ENCODE measurements at regions of chr15 and their contacts with region 1.

Region 1: GRCh38 chr15:57375827-57376695 is at the start of gene CGNL1:
- DNase-seq: peak; percentile 9
- ATAC-seq: no peak
- H3K4me3 Mint-ChIP-seq: peak within 1 kb of the TSS; percentile 41
- H3K27ac Mint-ChIP-seq: no peak within 1 kb of the TSS
- H3K4me1 Mint-ChIP-seq: peaks cover 10% of the 10 kb centered on the region
- H3K27me3 Mint-ChIP-seq: peaks cover 44% of the 10 kb centered on the region
- total RNA-seq, gene CGNL1: not detected

Region 2: GRCh38 chr15:57205996-57206395 is 170.1 kb before region 1 on chr15:
- CTCF ChIA-PET with region 1: no interaction called
- POLR2A ChIA-PET with region 1: no interaction called
- intact Hi-C with region 1: no loop called
- DNase-seq: no peak
- ATAC-seq: no peak
- H3K4me3 Mint-ChIP-seq: no peak overlapping the region
- H3K27ac Mint-ChIP-seq: no peak overlapping the region
- H3K4me1 Mint-ChIP-seq: peaks cover 7% of the 10 kb centered on the region
- H3K27me3 Mint-ChIP-seq: no peaks in the 10 kb centered on the region

Region 3: DNA sequence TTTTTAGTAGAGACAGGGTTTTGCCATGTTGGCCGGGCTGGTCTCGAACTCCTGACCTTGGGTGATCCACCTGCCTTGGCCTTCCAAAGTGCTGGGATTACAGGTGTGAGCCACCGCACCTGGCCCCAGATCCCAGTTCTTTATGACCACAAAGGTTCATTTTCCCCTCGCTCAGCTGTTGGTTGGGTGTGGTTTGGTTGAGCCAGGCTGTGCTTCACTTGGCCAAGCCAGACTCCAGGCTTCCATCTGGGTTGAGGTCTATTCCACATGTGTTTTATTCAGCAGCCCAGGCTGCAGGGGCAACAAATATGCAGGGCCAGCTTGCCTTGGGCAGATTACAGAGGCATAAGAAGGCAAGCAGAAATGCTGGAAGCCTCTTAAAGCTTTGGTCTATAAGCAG is 13.9 kb after region 1 on chr15:
- CTCF ChIA-PET with region 1: interaction called, 3 read pairs
- POLR2A ChIA-PET with region 1: no interaction called
- intact Hi-C with region 1: loop called in 1 of 2 experiments (anchors 1 kb)
- DNase-seq: no peak
- ATAC-seq: no peak
- H3K4me3 Mint-ChIP-seq: no peak overlapping the region
- H3K27ac Mint-ChIP-seq: no peak overlapping the region
- H3K4me1 Mint-ChIP-seq: no peaks in the 10 kb centered on the region
- H3K27me3 Mint-ChIP-seq: peaks cover 6% of the 10 kb centered on the region

Region 4: DNA sequence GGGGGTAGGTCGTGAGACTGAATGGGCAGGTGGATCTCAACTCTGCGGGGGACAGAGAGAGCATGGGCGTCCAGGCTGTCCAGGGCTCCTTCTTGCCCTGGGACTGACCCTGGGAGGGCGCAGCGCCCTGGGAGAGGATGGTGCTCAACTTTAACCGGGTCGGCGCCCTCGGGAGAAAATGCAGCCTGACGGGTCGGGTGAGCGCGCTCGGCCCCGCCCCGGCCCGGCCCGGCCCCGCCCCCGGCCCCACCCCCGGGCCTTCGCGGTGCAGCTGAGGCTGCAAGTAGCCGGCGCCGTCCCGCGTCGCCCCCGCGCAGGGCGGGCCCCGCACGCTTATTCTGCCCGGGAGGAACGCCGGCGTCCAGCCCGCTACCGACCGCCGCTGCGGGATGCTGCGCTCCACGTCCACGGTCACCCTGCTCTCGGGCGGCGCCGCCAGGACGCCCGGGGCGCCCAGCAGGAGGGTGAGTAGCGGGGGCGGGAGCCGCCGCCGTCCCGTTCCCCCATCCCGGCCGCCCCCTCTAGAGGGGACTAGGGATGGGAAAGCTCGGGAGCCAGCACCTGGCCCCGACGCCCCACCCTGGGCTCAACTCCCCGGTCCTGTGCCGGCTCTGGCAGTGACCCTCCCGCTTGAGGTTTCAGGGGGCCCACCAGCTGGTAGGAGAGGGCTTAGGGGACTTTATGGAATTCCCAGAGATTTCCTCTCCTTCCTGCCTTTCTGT is 215.7 kb after region 1 on chr15 and contains the start of gene MYZAP:
- CTCF ChIA-PET with region 1: no interaction called
- POLR2A ChIA-PET with region 1: no interaction called
- intact Hi-C with region 1: no loop called
- DNase-seq: peak; percentile 64
- ATAC-seq: peak; percentile 72
- H3K4me3 Mint-ChIP-seq: peak within 1 kb of the TSS; percentile 57
- H3K27ac Mint-ChIP-seq: no peak within 1 kb of the TSS
- H3K4me1 Mint-ChIP-seq: peaks cover 29% of the 10 kb centered on the region
- H3K27me3 Mint-ChIP-seq: peaks cover 21% of the 10 kb centered on the region
- total RNA-seq, gene MYZAP: 0.11 TPM